Activated B cell treated with CpG ODN at 0.5 μM for 24 hours (primary cell): ENCODE measurements at regions of chr2 and their contacts with region 1.

Region 1: GRCh38 chr2:73385595-73386341 is at the start of gene ALMS1:
- DNase-seq: peak; percentile 85
- ATAC-seq: peak; percentile 85
- H3K4me3 Mint-ChIP-seq: peak within 1 kb of the TSS; percentile 90
- H3K27ac Mint-ChIP-seq: peak within 1 kb of the TSS; percentile 89
- H3K4me1 Mint-ChIP-seq: peaks cover 19% of the 10 kb centered on the region
- H3K27me3 Mint-ChIP-seq: peaks cover 3% of the 10 kb centered on the region
- CTCF ChIP-seq: no peak
- total RNA-seq, gene ALMS1: 17.8 and 20.1 TPM in 2 replicates

Region 2: DNA sequence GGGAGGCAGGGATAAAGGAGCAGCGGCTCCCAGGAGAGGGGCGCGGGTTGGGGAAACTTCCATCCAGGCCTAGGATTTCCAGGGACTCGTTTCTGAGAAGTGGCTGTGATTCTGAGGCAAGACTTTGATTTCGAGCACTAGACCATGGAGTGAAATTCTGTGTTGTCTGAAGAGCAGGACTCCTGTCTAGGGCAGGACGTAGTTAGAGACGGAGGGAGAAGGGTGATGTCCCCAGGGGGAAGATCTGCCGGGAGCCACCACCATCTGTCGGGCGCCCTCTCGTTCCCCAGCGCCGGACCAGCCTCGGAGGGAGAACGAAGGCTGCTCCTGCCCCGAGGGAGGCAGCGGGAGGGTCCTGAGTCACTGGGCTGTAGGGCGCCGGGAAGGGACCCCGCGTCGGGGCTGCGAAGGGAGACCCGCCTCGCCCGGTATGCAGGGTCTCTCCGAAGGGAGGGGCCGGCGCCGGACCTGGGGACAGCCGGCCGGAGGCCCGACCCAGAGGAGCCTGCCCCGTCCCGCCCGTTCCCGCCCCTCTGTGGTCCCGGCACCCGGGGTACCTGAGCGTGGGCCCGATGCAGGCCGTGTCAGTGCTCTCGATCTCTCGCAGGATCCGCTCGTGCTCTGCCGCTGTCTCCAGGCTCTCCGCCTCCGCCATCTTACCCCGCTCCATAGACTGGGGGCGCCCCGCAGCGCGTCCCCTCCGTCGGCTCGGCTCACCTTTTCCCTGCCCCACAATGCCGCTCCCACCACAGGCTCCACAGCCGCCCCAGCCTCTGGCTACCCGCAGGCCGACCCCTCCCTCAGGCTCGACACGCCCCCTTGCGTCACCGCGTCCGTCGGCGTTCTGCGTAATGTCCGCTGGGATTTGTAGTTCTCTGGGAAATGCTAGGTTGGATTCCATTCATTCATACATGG is 560.3 kb before region 1 on chr2 and contains the start of gene EXOC6B:
- CTCF ChIA-PET with region 1: no interaction called
- POLR2A ChIA-PET with region 1: no interaction called
- intact Hi-C with region 1: loop called (anchors 10 kb)
- DNase-seq: peak; percentile 79
- ATAC-seq: peak; percentile 89
- H3K4me3 Mint-ChIP-seq: peak within 1 kb of the TSS; percentile 97
- H3K27ac Mint-ChIP-seq: peak within 1 kb of the TSS; percentile 68
- H3K4me1 Mint-ChIP-seq: peaks cover 24% of the 10 kb centered on the region
- H3K27me3 Mint-ChIP-seq: peaks cover 12% of the 10 kb centered on the region
- CTCF ChIP-seq: no peak
- total RNA-seq, gene EXOC6B: 13.0 and 13.8 TPM in 2 replicates

Region 3: DNA sequence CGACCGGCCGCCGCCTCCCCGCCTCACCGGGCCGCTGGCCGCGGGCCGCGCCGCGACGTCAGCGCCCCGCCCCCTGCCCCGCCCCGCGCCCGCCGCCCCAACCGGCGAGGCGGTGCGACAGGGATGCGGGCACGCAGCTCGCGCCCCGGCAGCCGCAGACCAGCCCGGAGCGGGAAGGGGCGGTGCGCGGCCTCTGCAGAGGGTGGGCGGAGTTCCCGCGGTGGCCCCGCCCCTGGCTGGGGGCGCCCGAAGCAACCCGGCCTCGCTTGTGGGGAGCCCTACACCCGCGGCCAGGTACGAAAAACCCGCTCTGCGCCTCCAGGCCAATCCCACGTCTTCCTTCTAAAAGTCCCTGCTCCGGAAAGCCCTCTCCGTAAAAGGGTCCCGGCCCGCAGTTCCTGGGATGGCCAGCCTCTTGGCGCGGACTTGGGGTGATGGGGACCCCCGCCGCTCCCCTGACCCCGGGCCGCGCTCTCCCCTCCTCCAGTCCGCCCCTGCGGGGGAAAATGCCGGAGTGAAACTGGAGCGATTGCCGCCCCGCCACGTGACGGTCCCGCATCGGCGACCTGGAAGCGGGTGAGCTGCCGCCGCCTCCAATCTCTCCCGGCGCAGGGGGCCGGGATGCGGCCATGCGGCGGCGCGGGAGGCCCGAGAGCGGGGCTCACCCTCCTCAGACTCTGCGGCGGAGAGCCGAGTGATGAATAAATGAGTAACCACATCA is 272.7 kb before region 1 on chr2 and contains the start of gene RAB11FIP5:
- CTCF ChIA-PET with region 1: no interaction called
- POLR2A ChIA-PET with region 1: no interaction called
- intact Hi-C with region 1: loop called (anchors 5 kb)
- DNase-seq: peak; percentile 75
- ATAC-seq: peak; percentile 91
- H3K4me3 Mint-ChIP-seq: peak within 1 kb of the TSS; percentile 77
- H3K27ac Mint-ChIP-seq: peak within 1 kb of the TSS; percentile 59
- H3K4me1 Mint-ChIP-seq: peaks cover 11% of the 10 kb centered on the region
- H3K27me3 Mint-ChIP-seq: no peaks in the 10 kb centered on the region
- CTCF ChIP-seq: no peak
- total RNA-seq, gene RAB11FIP5: 3.2 and 3.5 TPM in 2 replicates

Region 4: GRCh38 chr2:73284296-73285158 is 101.2 kb before region 1 on chr2 and contains the start of gene FBXO41:
- CTCF ChIA-PET with region 1: no interaction called
- POLR2A ChIA-PET with region 1: interaction called, 23 read pairs
- intact Hi-C with region 1: loop called (anchors 1 kb)
- DNase-seq: peak; percentile 67
- ATAC-seq: peak; percentile 73
- H3K4me3 Mint-ChIP-seq: peak within 1 kb of the TSS; percentile 82
- H3K27ac Mint-ChIP-seq: peak within 1 kb of the TSS; percentile 89
- H3K4me1 Mint-ChIP-seq: peaks cover 36% of the 10 kb centered on the region
- H3K27me3 Mint-ChIP-seq: no peaks in the 10 kb centered on the region
- CTCF ChIP-seq: no peak
- total RNA-seq, gene FBXO41: 21.4 and 25.7 TPM in 2 replicates

Region 5: GRCh38 chr2:73293534-73294171 is 92.1 kb before region 1 on chr2 and contains the start of gene EGR4:
- CTCF ChIA-PET with region 1: interaction called, 3 read pairs
- POLR2A ChIA-PET with region 1: interaction called, 3 read pairs
- intact Hi-C with region 1: loop called (anchors 1 kb)
- DNase-seq: peak; percentile 68
- ATAC-seq: peak; percentile 87
- H3K4me3 Mint-ChIP-seq: peak within 1 kb of the TSS; percentile 77
- H3K27ac Mint-ChIP-seq: no peak within 1 kb of the TSS
- H3K4me1 Mint-ChIP-seq: peaks cover 28% of the 10 kb centered on the region
- H3K27me3 Mint-ChIP-seq: peaks cover 41% of the 10 kb centered on the region
- CTCF ChIP-seq: no peak
- total RNA-seq, gene EGR4: 0.20 TPM in 1 of 2 replicates, not detected in the other

Region 6: GRCh38 chr2:73736855-73737779 is 351.3 kb after region 1 on chr2 and contains the start of gene TPRKB:
- CTCF ChIA-PET with region 1: no interaction called
- POLR2A ChIA-PET with region 1: interaction called, 4 read pairs
- intact Hi-C with region 1: loop called (anchors 1 kb)
- DNase-seq: peak; percentile 85
- ATAC-seq: peak; percentile 98
- H3K4me3 Mint-ChIP-seq: peak within 1 kb of the TSS; percentile 94
- H3K27ac Mint-ChIP-seq: peak within 1 kb of the TSS; percentile 90
- H3K4me1 Mint-ChIP-seq: peaks cover 18% of the 10 kb centered on the region
- H3K27me3 Mint-ChIP-seq: no peaks in the 10 kb centered on the region
- CTCF ChIP-seq: no peak
- total RNA-seq, gene TPRKB: 26.9 and 27.1 TPM in 2 replicates